B cell (primary cell): ENCODE measurements at regions of chr9 and their contacts with region 1.

Region 1: DNA sequence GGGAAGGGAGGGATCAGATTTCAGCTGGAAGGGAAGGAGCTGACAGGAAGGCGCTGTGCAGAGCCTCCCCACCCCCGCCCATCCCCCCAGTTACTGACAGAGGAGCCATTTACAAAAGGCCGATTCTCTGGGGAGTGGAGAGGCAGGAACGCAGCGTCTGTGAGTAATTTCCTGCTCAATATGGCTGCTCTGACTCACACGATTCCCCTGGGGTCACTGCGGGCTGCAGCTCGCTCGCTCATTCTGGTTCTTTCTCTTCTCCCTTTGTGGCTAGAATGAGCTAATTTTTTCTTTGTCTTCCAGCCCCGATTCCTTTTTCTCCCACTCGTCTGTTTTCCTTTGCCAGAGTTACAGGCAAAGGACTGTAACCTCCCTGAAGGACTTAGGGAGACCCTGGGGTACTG is 28.8 kb downstream of the PTPA start:
- DNase-seq: peak; percentile 95
- ATAC-seq: peak; percentile 83
- H3K4me3 ChIP-seq: peak overlapping the region; percentile 43 to 64 (median 57)
- H3K4me3 Mint-ChIP-seq: peak overlapping the region; percentile 90
- H3K27ac ChIP-seq: peak overlapping the region; percentile 97 to 100
- H3K27ac Mint-ChIP-seq: peak overlapping the region; percentile 94
- H3K4me1 ChIP-seq: peaks cover 43 to 50% of the 10 kb centered on the region in 2 donors
- H3K4me1 Mint-ChIP-seq: peaks cover 47% of the 10 kb centered on the region
- H3K27me3 ChIP-seq: no peaks in the 10 kb centered on the region
- H3K27me3 Mint-ChIP-seq: no peaks in the 10 kb centered on the region
- CTCF ChIP-seq: no peak

Region 2: DNA sequence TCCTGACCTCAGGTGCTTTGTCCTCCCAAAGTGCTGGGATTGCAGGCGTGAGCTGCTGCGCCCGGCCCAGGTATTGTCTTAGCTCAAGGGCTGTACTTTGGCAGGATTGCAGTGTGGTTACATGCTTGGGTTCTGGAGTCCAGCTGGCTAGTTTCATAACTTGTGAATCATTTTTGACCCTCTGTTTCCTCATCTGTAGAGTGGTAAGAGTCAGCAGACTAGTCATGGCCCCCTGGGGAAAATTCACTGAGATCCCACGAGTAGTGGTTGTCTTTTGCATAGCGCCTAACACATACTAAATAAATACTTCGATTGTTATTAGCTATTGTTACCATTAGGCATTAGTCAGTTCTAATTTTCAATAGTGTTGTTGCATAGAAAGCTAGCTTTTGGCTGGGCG is 14.5 kb before region 1 on chr9:
- CTCF ChIA-PET with region 1: interaction called, 113 read pairs
- POLR2A ChIA-PET with region 1: no interaction called
- intact Hi-C with region 1: no loop called
- DNase-seq: no peak
- ATAC-seq: no peak
- H3K4me3 ChIP-seq: no peak overlapping the region
- H3K4me3 Mint-ChIP-seq: no peak overlapping the region
- H3K27ac ChIP-seq: no peak overlapping the region
- H3K27ac Mint-ChIP-seq: no peak overlapping the region
- H3K4me1 ChIP-seq: no peaks in the 10 kb centered on the region
- H3K4me1 Mint-ChIP-seq: peaks cover 2% of the 10 kb centered on the region
- H3K27me3 ChIP-seq: no peaks in the 10 kb centered on the region
- H3K27me3 Mint-ChIP-seq: no peaks in the 10 kb centered on the region
- CTCF ChIP-seq: no peak

Region 3: DNA sequence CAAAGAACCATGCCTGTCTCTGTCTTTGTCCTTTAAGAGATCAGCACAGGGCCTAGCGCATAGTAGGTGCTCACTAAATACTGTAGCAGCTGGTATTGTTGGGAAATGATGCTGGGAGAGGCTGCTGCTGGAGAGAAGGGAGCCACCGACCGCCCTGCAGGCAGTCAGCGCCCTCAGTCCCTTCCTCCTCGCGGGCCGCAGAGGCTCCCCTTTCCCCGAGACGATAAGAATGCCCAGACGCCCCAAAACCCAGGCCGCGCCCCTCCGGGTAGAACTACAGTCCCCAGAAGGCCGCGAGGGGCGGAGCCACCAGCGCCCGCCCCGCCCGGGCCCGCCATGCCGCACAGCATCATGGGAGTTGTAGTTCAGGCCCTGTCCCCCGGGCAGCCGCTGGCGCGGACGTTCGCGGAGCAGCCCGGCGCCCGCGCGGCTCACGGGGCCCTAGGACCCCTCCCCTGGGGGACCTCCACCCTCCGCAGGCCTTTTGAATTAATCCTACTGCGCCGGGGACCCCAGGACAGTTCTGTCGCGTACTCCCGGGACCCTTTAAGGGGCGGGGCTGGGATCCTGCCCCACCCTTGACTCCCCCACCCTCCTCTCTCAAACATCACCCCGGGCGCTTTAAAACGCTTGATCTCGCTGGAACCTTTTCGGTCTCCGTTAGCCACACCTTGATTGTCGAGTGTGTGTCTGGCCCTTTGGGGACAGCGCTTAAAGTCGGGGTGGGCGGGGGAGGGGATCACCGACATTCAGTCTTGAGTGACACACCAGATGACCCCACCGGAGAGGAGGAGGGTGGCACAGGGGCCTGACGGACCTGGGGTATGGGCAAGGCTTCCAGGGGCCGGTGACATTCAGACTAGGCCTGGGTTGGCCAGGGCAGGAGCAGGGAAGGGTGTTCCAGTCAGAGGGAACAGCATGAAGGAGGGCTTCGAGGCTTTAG is 62.9 kb after region 1 on chr9:
- CTCF ChIA-PET with region 1: no interaction called
- POLR2A ChIA-PET with region 1: no interaction called
- intact Hi-C with region 1: loop called (anchors 2 kb)
- DNase-seq: peak; percentile 93
- ATAC-seq: peak; percentile 100
- H3K4me3 ChIP-seq: peak overlapping the region in 4 of 5 experiments; percentile 56 to 70 (median 63)
- H3K4me3 Mint-ChIP-seq: peak overlapping the region; percentile 75
- H3K27ac ChIP-seq: peak overlapping the region in 1 of 2 donors; percentile 76
- H3K27ac Mint-ChIP-seq: peak overlapping the region; percentile 78
- H3K4me1 ChIP-seq: peaks cover 2 to 8% of the 10 kb centered on the region in 2 donors
- H3K4me1 Mint-ChIP-seq: peaks cover 3% of the 10 kb centered on the region
- H3K27me3 ChIP-seq: peaks cover 0 to 13% (median 0%) of the 10 kb centered on the region in 4 experiments
- H3K27me3 Mint-ChIP-seq: no peaks in the 10 kb centered on the region
- CTCF ChIP-seq: no peak

Region 4: DNA sequence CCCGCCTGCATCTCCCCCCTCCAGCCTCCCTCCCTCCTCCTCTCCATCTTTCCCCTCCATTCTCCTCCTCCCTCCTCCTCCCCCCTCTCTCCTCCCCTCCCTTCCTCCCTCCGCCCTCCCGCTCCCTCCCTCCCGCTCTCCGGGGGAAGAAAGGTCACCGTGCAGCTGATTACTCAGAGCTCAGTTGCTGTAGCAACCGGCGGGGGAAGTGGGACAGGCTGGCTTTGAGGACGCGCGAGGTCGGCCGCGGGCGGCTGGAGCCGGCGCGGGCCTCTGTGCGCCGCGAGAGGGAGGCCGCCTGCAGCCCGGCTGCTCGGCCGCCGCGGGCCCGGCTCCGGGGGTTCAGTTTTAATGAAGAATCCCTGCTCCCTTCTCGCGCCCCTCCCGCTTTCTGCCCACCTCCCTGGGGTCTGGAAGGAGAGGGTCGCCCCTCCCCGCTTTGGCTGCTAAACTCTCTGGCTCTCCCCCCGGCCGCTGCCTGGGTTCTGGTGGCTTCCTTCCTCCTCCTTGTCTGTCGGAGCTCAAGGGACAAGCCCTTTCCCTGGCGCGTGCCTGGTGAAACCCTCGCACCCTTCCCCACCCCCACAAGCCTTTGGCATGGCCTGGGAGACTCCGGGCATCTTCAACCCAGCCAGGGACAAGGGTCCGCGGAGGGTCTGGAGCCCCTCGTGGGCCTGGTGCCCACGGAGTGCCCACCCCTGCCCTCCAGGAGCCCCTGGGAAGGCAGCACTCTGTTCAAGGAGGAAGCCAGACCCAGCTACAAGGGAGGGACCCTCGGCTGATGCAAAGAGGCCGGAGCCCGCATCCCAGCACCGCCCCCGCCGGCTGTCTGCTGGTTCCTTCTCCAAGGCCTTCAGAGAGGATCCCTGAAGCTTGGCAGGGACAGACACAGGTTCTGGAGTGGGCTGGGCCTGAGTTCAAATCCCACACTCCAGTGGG is 320.6 kb after region 1 on chr9:
- CTCF ChIA-PET with region 1: interaction called, 6 read pairs
- POLR2A ChIA-PET with region 1: interaction called, 18 read pairs
- intact Hi-C with region 1: no loop called
- DNase-seq: peak; percentile 84
- ATAC-seq: peak; percentile 73
- H3K4me3 ChIP-seq: peak overlapping the region in 4 of 5 experiments; percentile 43 to 61 (median 49)
- H3K4me3 Mint-ChIP-seq: peak overlapping the region; percentile 86
- H3K27ac ChIP-seq: peak overlapping the region; percentile 34 to 66
- H3K27ac Mint-ChIP-seq: peak overlapping the region; percentile 90
- H3K4me1 ChIP-seq: peaks cover 33 to 35% of the 10 kb centered on the region in 2 donors
- H3K4me1 Mint-ChIP-seq: peaks cover 27% of the 10 kb centered on the region
- H3K27me3 ChIP-seq: peaks cover 0 to 10% (median 3%) of the 10 kb centered on the region in 4 experiments
- H3K27me3 Mint-ChIP-seq: no peaks in the 10 kb centered on the region
- CTCF ChIP-seq: no peak

Region 5: GRCh38 chr9:129626079-129626624 is 486.2 kb after region 1 on chr9 and contains the start of gene NTMT1:
- CTCF ChIA-PET with region 1: interaction called, 269 read pairs
- POLR2A ChIA-PET with region 1: interaction called, 22 read pairs
- intact Hi-C with region 1: loop called (anchors 1 kb)
- DNase-seq: peak; percentile 96
- ATAC-seq: peak; percentile 83
- H3K4me3 ChIP-seq: peak within 1 kb of the TSS; percentile 51 to 89 (median 88)
- H3K4me3 Mint-ChIP-seq: peak within 1 kb of the TSS; percentile 84
- H3K27ac ChIP-seq: peak within 1 kb of the TSS; percentile 70 to 99
- H3K27ac Mint-ChIP-seq: peak within 1 kb of the TSS; percentile 83
- H3K4me1 ChIP-seq: peaks cover 29 to 34% of the 10 kb centered on the region in 2 donors
- H3K4me1 Mint-ChIP-seq: peaks cover 50% of the 10 kb centered on the region
- H3K27me3 ChIP-seq: peaks cover 0 to 9% (median 3%) of the 10 kb centered on the region in 4 experiments
- H3K27me3 Mint-ChIP-seq: peaks cover 12% of the 10 kb centered on the region
- CTCF ChIP-seq: no peak
- total RNA-seq, gene NTMT1: 33.6 and 35.3 TPM in 2 replicates

Region 6: DNA sequence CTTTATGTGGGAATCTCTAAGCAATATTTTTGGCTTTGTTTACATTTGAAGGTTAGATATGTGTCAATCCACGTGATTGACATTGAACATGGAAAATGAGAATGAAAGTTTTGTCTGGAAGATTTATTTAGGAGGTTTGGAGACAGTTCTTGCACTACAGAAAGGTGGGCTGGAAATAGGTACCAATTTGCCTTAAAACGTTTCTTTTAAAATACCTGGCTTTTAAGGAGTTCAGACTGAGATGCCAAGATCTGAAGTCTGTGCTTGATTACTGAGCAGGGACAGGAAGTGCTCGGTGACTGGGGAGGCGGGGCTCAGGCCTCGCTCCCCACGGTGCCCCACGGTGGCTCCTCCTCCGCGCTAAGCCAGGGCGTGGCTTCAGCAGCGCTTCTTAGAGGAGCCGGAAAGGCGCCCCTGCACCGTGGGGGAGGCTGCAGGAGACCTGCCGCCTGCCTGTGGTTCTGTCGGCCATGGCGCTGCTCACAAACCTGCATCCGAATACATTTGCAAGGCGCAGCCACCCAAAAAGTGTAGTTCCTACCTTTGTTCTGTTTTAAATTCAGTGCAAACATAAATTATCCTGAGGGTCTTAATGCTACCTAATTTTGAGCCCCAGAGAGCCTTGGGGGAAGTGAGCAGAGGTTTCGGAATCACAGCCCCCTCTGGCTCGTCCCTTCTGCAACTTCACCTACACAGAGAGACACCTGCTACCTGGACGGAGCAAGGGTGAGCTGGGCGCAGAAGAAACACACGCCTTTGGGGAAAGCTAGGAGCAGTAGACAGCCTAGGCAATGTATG is 744.4 kb after region 1 on chr9:
- CTCF ChIA-PET with region 1: no interaction called
- POLR2A ChIA-PET with region 1: no interaction called
- intact Hi-C with region 1: loop called (anchors 2 kb)
- DNase-seq: peak; percentile 95
- ATAC-seq: peak; percentile 57
- H3K4me3 ChIP-seq: peak overlapping the region; percentile 39 to 81 (median 65)
- H3K4me3 Mint-ChIP-seq: peak overlapping the region; percentile 95
- H3K27ac ChIP-seq: peak overlapping the region; percentile 75 to 90
- H3K27ac Mint-ChIP-seq: peak overlapping the region; percentile 97
- H3K4me1 ChIP-seq: peaks cover 48 to 58% of the 10 kb centered on the region in 2 donors
- H3K4me1 Mint-ChIP-seq: peaks cover 58% of the 10 kb centered on the region
- H3K27me3 ChIP-seq: no peaks in the 10 kb centered on the region
- H3K27me3 Mint-ChIP-seq: no peaks in the 10 kb centered on the region
- CTCF ChIP-seq: peak; percentile 29